ENCODE measurements at regions of chr4 and their contacts with region 1.

Region 1: DNA sequence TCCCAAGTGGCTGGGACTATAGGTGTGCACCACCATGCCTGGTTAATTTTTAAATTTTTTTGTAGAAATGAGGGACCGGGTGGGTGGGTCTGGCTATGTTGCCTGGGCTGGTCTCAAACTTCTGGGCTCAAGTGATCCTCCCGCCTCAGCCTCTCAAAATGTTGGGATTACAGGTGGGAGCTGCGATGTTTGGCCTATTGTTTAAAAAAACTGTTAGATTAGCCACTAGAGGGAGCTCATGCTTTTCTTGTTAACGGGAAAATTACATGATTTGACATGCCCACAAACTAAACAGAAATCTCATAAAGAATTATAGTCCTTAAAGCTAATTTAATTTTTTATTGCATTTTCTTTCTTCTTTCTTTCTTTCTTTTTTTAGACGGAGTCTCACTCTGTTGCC is 5.0 kb upstream of the SDAD1 start:
- DNase-seq: peak; percentile 16
- ATAC-seq: no peak
- H3K4me3 Mint-ChIP-seq: no peak overlapping the region
- H3K27ac Mint-ChIP-seq: no peak overlapping the region
- H3K4me1 Mint-ChIP-seq: peaks cover 6% of the 10 kb centered on the region
- H3K27me3 Mint-ChIP-seq: no peaks in the 10 kb centered on the region

Region 2: DNA sequence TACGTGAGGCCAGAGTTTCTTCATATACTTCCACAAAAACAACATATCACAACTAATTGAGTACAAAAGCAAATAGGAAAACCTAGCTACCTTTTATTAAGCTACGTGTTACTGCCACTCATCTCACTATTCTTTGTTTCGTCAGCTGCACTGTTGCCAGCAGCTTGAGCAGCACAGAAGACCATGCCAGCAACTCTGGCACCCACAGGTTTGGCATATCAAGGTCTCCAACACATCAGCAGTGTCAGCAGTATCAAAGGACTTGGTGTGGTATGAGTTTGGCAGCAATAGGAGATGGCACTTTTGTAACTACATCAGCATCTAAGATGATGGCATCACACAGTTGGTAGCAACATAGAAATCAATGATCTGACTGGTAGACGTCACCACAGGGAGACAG is 396.1 kb before region 1 on chr4:
- CTCF ChIA-PET with region 1: no interaction called
- POLR2A ChIA-PET with region 1: interaction called, 12 read pairs
- intact Hi-C with region 1: no loop called
- DNase-seq: no peak
- ATAC-seq: no peak
- H3K4me3 Mint-ChIP-seq: no peak overlapping the region
- H3K27ac Mint-ChIP-seq: no peak overlapping the region
- H3K4me1 Mint-ChIP-seq: peaks cover 2% of the 10 kb centered on the region
- H3K27me3 Mint-ChIP-seq: peaks cover 1% of the 10 kb centered on the region

Region 3: DNA sequence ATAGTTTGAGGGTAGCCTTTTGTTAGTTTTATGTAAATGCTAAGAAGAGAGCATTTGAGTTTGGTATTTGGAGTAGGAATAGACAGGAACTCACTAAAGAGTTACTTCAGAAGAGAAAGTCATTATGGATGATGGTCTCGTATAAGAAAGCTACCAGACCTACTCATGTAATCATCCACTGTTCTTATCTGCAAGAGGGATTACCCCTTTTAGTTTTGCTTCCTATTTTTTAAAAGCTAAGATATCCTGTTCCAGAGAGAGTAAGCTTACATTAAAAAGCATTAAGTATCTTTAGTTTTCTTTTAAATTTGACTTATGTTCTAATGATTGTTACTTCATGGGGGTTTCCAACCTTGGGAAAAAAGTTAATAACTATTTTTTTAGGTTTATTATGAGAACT is 66.3 kb after region 1 on chr4:
- CTCF ChIA-PET with region 1: interaction called, 55 read pairs
- POLR2A ChIA-PET with region 1: no interaction called
- intact Hi-C with region 1: loop called (anchors 1 kb)
- DNase-seq: no peak
- ATAC-seq: no peak
- H3K4me3 Mint-ChIP-seq: no peak overlapping the region
- H3K27ac Mint-ChIP-seq: no peak overlapping the region
- H3K4me1 Mint-ChIP-seq: peaks cover 47% of the 10 kb centered on the region
- H3K27me3 Mint-ChIP-seq: peaks cover 17% of the 10 kb centered on the region

Region 4: DNA sequence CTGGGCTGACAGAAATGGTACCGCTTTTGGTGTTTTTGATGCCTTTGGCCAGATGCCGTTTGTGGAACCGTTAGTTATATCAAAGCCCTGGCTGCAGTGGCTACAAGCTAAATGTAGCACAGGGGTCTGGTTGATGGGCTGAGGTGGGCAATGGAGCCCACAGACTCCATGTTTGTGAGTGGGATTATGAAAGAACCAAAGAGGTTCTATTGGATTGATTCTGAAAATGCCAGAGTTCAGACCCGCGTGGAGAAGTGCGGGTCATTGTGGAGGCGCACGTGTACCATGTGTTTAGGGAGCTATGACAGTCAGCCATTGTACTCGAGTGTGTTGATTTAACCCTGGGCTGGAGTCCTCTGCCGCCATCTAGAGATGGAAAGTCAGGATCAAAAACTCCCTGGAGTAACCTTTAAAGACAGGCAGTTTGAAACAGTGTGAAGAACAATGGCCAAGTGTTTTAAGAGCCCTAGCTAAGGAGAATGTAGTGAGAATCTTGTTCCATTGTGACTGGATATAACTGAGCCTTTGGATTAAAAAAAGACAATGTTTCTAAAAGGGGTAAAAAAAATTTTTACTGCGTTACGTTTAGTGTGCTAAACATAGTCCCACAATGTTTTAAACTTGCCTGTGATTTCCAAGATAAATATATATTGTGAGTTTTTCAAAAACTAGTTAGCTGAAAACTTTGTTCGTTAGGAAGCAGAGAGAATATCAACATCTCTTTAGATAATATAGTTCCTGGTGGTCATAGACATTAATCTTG is 91.5 kb after region 1 on chr4:
- CTCF ChIA-PET with region 1: interaction called, 17 read pairs
- POLR2A ChIA-PET with region 1: no interaction called
- intact Hi-C with region 1: no loop called
- DNase-seq: peak; percentile 34
- ATAC-seq: peak; percentile 61
- H3K4me3 Mint-ChIP-seq: no peak overlapping the region
- H3K27ac Mint-ChIP-seq: no peak overlapping the region
- H3K4me1 Mint-ChIP-seq: peaks cover 5% of the 10 kb centered on the region
- H3K27me3 Mint-ChIP-seq: peaks cover 10% of the 10 kb centered on the region